Naive thymus-derived CD4-positive, alpha-beta T cell (primary cell): ENCODE measurements at regions of chr20 and their contacts with region 1.

Region 1: GRCh38 chr20:2688041-2688591 is 4.5 kb upstream of the EBF4 start:
- DNase-seq: peak; percentile 71 to 89 (median 81)
- ATAC-seq: peak; percentile 95
- H3K4me3 ChIP-seq: no peak overlapping the region
- H3K4me3 Mint-ChIP-seq: peak overlapping the region in 9 of 10 donors; percentile 34 to 73 (median 58)
- H3K27ac ChIP-seq: no peak overlapping the region
- H3K27ac Mint-ChIP-seq: peak overlapping the region in 6 of 9 donors; percentile 37 to 80 (median 71)
- H3K4me1 ChIP-seq: peaks cover 6 to 13% of the 10 kb centered on the region in 2 donors
- H3K4me1 Mint-ChIP-seq: peaks cover 24 to 31% (median 27%) of the 10 kb centered on the region in 7 donors
- H3K27me3 ChIP-seq: no peaks in the 10 kb centered on the region
- H3K27me3 Mint-ChIP-seq: peaks cover 0 to 34% (median 7%) of the 10 kb centered on the region in 5 donors

Region 2: DNA sequence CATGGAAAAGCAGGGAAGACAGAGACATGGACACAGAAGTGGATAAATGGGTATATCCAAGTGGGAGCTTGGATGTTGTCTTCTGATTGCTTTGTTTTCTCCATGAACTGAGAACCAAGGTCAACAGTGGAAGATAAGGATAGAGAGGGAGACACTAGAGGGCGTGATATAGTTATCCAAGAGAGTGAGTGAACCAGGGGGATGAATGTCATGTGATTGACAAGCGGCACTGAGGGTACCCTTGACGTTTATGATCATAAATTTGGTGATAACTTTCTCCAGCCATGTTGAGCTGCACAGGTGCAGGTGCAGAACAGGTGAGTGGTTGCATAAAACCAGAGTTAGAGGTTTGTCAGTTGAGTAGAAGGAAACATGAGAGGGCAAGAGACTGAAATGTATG is 25.2 kb after region 1 on chr20:
- CTCF ChIA-PET with region 1: interaction called, 6 read pairs
- POLR2A ChIA-PET with region 1: no interaction called
- intact Hi-C with region 1: loop called in 1 of 2 experiments (anchors 1 kb)
- DNase-seq: peak in 7 of 9 donors; percentile 30 to 64 (median 51)
- ATAC-seq: peak; percentile 73
- H3K4me3 ChIP-seq: no peak overlapping the region
- H3K4me3 Mint-ChIP-seq: no peak overlapping the region
- H3K27ac ChIP-seq: no peak overlapping the region
- H3K27ac Mint-ChIP-seq: no peak overlapping the region
- H3K4me1 ChIP-seq: peaks cover 0 to 3% of the 10 kb centered on the region in 2 donors
- H3K4me1 Mint-ChIP-seq: peaks cover 0 to 4% (median 0%) of the 10 kb centered on the region in 7 donors
- H3K27me3 ChIP-seq: no peaks in the 10 kb centered on the region
- H3K27me3 Mint-ChIP-seq: peaks cover 0 to 4% (median 0%) of the 10 kb centered on the region in 5 donors

Region 3: GRCh38 chr20:2742934-2743559 is 54.9 kb after region 1 on chr20:
- CTCF ChIA-PET with region 1: interaction called, 23 read pairs
- POLR2A ChIA-PET with region 1: interaction called, 22 read pairs
- intact Hi-C with region 1: loop called (anchors 1 kb)
- DNase-seq: peak; percentile 51 to 84 (median 73)
- ATAC-seq: peak; percentile 75
- H3K4me3 ChIP-seq: peak overlapping the region; percentile 29
- H3K4me3 Mint-ChIP-seq: peak overlapping the region; percentile 66 to 85 (median 76)
- H3K27ac ChIP-seq: peak overlapping the region; percentile 65
- H3K27ac Mint-ChIP-seq: peak overlapping the region; percentile 87 to 99 (median 94)
- H3K4me1 ChIP-seq: peaks cover 30 to 48% of the 10 kb centered on the region in 2 donors
- H3K4me1 Mint-ChIP-seq: peaks cover 34 to 54% (median 50%) of the 10 kb centered on the region in 7 donors
- H3K27me3 ChIP-seq: no peaks in the 10 kb centered on the region
- H3K27me3 Mint-ChIP-seq: peaks cover 0 to 21% (median 0%) of the 10 kb centered on the region in 5 donors

Region 4: DNA sequence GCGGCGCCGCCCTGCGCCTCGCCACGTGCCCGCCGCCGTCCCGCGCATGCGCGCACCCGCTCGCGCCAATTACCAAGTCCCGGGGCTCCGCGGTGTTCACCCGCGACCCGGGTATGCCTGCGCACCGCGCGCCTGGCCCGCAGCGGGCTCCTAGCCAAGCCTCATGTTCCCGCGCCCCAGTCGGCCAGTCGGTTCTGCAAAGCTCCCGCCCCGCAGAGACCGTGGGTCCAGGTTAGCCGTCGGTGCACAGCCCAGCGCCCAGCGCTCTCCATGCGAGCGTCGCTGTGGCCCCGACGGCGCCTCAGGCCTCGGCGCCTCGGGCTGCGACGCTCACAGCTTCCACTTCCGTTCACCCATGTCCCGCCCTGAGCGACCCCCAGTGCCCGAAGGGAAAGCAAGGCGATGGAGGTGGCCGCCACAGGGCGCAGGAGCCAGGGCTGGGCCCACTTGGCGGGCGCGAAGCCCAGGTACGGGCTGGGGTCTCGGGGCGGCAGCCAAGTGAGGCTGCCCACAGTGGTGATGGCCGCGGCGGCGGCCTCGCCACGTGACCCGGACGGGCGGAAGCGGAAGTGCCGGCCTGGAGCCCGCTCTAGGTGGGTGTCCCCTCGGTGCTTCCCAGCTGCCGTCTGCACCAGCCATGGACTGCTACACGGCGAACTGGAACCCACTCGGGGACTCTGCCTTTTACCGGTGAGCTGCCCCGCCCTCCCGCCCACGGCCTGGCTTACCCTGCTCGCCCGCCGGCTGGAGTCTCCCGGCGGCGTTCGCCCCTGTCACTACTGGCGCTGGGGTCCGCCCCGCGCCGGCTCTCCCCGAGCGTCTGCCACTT is 152.2 kb after region 1 on chr20 and contains the starts of genes PCED1A and VPS16:
- CTCF ChIA-PET with region 1: no interaction called
- POLR2A ChIA-PET with region 1: no interaction called
- intact Hi-C with region 1: loop called in 1 of 2 experiments (anchors 2 kb)
- DNase-seq: peak; percentile 83 to 94 (median 90)
- ATAC-seq: peak; percentile 97
- H3K4me3 ChIP-seq: peak within 1 kb of the TSS; percentile 72
- H3K4me3 Mint-ChIP-seq: peak within 1 kb of the TSS; percentile 83 to 93 (median 90)
- H3K27ac ChIP-seq: peak within 1 kb of the TSS; percentile 77
- H3K27ac Mint-ChIP-seq: peak within 1 kb of the TSS; percentile 67 to 95 (median 92)
- H3K4me1 ChIP-seq: peaks cover 15 to 21% of the 10 kb centered on the region in 2 donors
- H3K4me1 Mint-ChIP-seq: peaks cover 18 to 48% (median 45%) of the 10 kb centered on the region in 7 donors
- H3K27me3 ChIP-seq: no peaks in the 10 kb centered on the region
- H3K27me3 Mint-ChIP-seq: no peaks in the 10 kb centered on the region
- total RNA-seq, gene PCED1A: 27.8 to 105 (median 72.5) TPM
- total RNA-seq, gene VPS16: 45.5 to 62.4 (median 56.1) TPM

Region 5: GRCh38 chr20:2873010-2873746 is 185.1 kb after region 1 on chr20 and contains the start of gene PTPRA:
- CTCF ChIA-PET with region 1: no interaction called
- POLR2A ChIA-PET with region 1: no interaction called
- intact Hi-C with region 1: loop called (anchors 1 kb)
- DNase-seq: peak; percentile 80 to 91 (median 88)
- ATAC-seq: peak; percentile 96
- H3K4me3 ChIP-seq: peak within 1 kb of the TSS; percentile 80
- H3K4me3 Mint-ChIP-seq: peak within 1 kb of the TSS; percentile 84 to 96 (median 94)
- H3K27ac ChIP-seq: peak within 1 kb of the TSS; percentile 71
- H3K27ac Mint-ChIP-seq: peak within 1 kb of the TSS; percentile 83 to 95 (median 90)
- H3K4me1 ChIP-seq: peaks cover 25% of the 10 kb centered on the region in 2 donors
- H3K4me1 Mint-ChIP-seq: peaks cover 31 to 47% (median 42%) of the 10 kb centered on the region in 7 donors
- H3K27me3 ChIP-seq: no peaks in the 10 kb centered on the region
- H3K27me3 Mint-ChIP-seq: no peaks in the 10 kb centered on the region
- total RNA-seq, gene PTPRA: 68.0 to 86.6 (median 81.2) TPM

Region 6: GRCh38 chr20:3000852-3001523 is 312.9 kb after region 1 on chr20:
- CTCF ChIA-PET with region 1: interaction called, 4 read pairs
- POLR2A ChIA-PET with region 1: no interaction called
- intact Hi-C with region 1: loop called (anchors 1 kb)
- DNase-seq: peak in 7 of 9 donors; percentile 11 to 66 (median 49)
- ATAC-seq: peak; percentile 88
- H3K4me3 ChIP-seq: no peak overlapping the region
- H3K4me3 Mint-ChIP-seq: no peak overlapping the region
- H3K27ac ChIP-seq: no peak overlapping the region
- H3K27ac Mint-ChIP-seq: peak overlapping the region in 1 of 9 donors; percentile 18
- H3K4me1 ChIP-seq: no peaks in the 10 kb centered on the region
- H3K4me1 Mint-ChIP-seq: peaks cover 0 to 2% (median 0%) of the 10 kb centered on the region in 7 donors
- H3K27me3 ChIP-seq: no peaks in the 10 kb centered on the region
- H3K27me3 Mint-ChIP-seq: no peaks in the 10 kb centered on the region